ENCODE measurements at regions of chr17 and their contacts with region 1.

Region 1: DNA sequence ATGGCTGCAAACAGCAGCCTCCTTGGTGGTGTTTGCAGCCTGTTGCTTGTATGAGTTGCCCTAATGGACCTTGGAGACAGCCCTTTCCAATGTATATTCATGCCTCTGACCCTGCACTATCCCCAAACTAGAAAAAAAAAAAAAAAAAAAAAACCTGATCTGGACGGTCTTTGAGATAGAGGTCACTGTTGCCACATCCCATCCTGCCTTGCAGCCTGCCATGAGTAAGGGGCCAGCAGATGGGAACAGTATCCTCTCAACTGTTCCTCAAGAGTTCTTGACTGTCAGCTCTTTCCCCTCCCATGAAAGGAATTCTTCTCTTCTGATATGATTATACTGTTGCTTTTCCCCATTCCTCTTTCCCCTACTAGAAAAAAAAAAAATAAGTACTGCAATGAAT is 152.4 kb downstream of the SSH2 start:
- DNase-seq: no peak
- ATAC-seq: no peak
- H3K4me3 ChIP-seq: no peak overlapping the region
- H3K4me3 Mint-ChIP-seq: no peak overlapping the region
- H3K27ac ChIP-seq: no peak overlapping the region
- H3K27ac Mint-ChIP-seq: no peak overlapping the region
- H3K4me1 ChIP-seq: peaks cover 4% of the 10 kb centered on the region
- H3K4me1 Mint-ChIP-seq: peaks cover 6% of the 10 kb centered on the region in 2 donors
- H3K27me3 ChIP-seq: no peaks in the 10 kb centered on the region
- H3K27me3 Mint-ChIP-seq: no peaks in the 10 kb centered on the region
- CTCF ChIP-seq: no peak

Region 2: GRCh38 chr17:29579866-29580771 is 197.5 kb before region 1 on chr17:
- intact Hi-C with region 1: loop called (anchors 1 kb)
- DNase-seq: peak; percentile 85 to 96
- ATAC-seq: peak; percentile 97 to 99 (median 99)
- H3K4me3 ChIP-seq: no peak overlapping the region
- H3K4me3 Mint-ChIP-seq: no peak overlapping the region
- H3K27ac ChIP-seq: peak overlapping the region; percentile 21
- H3K27ac Mint-ChIP-seq: peak overlapping the region; percentile 37 to 52
- H3K4me1 ChIP-seq: peaks cover 17% of the 10 kb centered on the region
- H3K4me1 Mint-ChIP-seq: peaks cover 9 to 24% of the 10 kb centered on the region in 2 donors
- H3K27me3 ChIP-seq: no peaks in the 10 kb centered on the region
- H3K27me3 Mint-ChIP-seq: no peaks in the 10 kb centered on the region
- CTCF ChIP-seq: peak; percentile 85

Region 3: DNA sequence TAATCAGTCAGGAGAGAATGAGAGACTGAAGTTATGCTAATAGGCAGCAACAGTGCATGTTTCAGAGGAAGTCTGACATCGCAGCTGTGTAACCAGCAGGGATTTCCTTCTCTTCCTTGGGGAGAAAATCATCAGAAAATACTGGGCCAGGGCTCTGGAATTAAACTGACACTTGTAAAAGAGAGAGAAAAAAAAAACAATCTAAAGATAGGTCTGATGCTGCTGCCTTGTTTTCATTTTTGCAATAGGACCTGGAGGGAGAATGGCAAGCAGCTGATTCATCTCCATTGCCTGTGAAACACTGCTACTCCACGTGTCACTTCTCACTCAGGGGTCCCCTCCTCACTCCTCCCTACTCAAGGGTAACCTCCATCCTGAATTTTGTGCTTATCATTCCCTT is 137.2 kb before region 1 on chr17:
- intact Hi-C with region 1: loop called (anchors 1 kb)
- DNase-seq: no peak
- ATAC-seq: no peak
- H3K4me3 ChIP-seq: no peak overlapping the region
- H3K4me3 Mint-ChIP-seq: no peak overlapping the region
- H3K27ac ChIP-seq: no peak overlapping the region
- H3K27ac Mint-ChIP-seq: peak overlapping the region; percentile 83 to 87
- H3K4me1 ChIP-seq: peaks cover 5% of the 10 kb centered on the region
- H3K4me1 Mint-ChIP-seq: peaks cover 21 to 32% of the 10 kb centered on the region in 2 donors
- H3K27me3 ChIP-seq: no peaks in the 10 kb centered on the region
- H3K27me3 Mint-ChIP-seq: no peaks in the 10 kb centered on the region
- CTCF ChIP-seq: no peak

Region 4: DNA sequence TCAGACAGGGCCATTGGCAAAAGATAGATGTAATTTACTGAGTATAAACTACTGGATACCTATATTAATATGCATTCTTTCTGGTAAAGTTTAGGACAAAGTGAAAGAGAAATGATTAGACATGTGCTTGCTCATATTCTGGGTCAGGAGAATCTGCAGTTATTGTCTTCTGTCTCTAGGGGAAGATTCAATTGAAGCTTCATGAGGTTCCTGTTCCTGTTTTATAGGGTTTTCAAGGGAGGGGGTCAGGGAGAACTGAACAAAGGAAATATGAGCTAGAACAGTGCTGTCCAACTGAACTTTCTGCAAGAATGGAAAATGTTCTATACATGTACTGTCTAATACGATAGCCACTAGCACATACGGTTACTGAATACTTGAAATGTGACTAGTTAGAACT is 95.6 kb before region 1 on chr17:
- intact Hi-C with region 1: loop called (anchors 5 kb)
- DNase-seq: peak in 1 of 2 donors; percentile 39
- ATAC-seq: peak; percentile 59 to 73 (median 60)
- H3K4me3 ChIP-seq: no peak overlapping the region
- H3K4me3 Mint-ChIP-seq: no peak overlapping the region
- H3K27ac ChIP-seq: peak overlapping the region; percentile 37
- H3K27ac Mint-ChIP-seq: peak overlapping the region; percentile 79
- H3K4me1 ChIP-seq: peaks cover 6% of the 10 kb centered on the region
- H3K4me1 Mint-ChIP-seq: peaks cover 17 to 18% of the 10 kb centered on the region in 2 donors
- H3K27me3 ChIP-seq: no peaks in the 10 kb centered on the region
- H3K27me3 Mint-ChIP-seq: no peaks in the 10 kb centered on the region
- CTCF ChIP-seq: no peak

Region 5: DNA sequence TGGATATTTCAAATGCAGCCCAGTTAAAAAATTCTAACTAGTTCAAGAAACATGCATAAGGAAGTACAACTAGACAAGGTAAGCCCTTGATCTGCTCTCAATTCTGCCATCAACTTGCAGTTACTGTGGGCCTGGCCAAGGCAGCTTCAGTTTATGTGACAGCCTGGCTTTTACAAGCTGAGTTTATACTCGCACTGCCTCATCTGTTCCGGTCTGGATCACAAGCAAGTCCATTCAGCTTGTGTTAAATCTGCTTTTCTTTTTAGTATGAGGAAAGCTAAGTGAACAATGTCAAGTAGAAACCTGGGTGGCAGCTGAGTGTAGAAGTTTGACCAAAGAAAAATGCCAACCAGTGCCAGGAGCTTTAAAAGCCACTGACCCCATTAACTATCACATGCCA is 78.4 kb before region 1 on chr17:
- intact Hi-C with region 1: loop called (anchors 2 kb)
- DNase-seq: no peak
- ATAC-seq: no peak
- H3K4me3 ChIP-seq: no peak overlapping the region
- H3K4me3 Mint-ChIP-seq: peak overlapping the region; percentile 42
- H3K27ac ChIP-seq: peak overlapping the region; percentile 38
- H3K27ac Mint-ChIP-seq: peak overlapping the region; percentile 90
- H3K4me1 ChIP-seq: peaks cover 24% of the 10 kb centered on the region
- H3K4me1 Mint-ChIP-seq: peaks cover 52 to 53% of the 10 kb centered on the region in 2 donors
- H3K27me3 ChIP-seq: no peaks in the 10 kb centered on the region
- H3K27me3 Mint-ChIP-seq: no peaks in the 10 kb centered on the region
- CTCF ChIP-seq: no peak